T-cell (primary cell): ENCODE measurements at regions of chr1 and their contacts with region 1.

Region 1: GRCh38 chr1:110460253-110461220 is 9.6 kb downstream of the PROK1 start:
- DNase-seq: peak; percentile 55 to 89 (median 79)
- ATAC-seq: peak; percentile 90 to 92 (median 91)
- H3K4me3 ChIP-seq: no peak overlapping the region
- H3K4me3 Mint-ChIP-seq: no peak overlapping the region
- H3K27ac ChIP-seq: no peak overlapping the region
- H3K27ac Mint-ChIP-seq: no peak overlapping the region
- H3K4me1 ChIP-seq: no peaks in the 10 kb centered on the region
- H3K4me1 Mint-ChIP-seq: no peaks in the 10 kb centered on the region
- H3K27me3 ChIP-seq: peaks cover 0 to 10% of the 10 kb centered on the region in 2 experiments
- H3K27me3 Mint-ChIP-seq: peaks cover 3 to 4% of the 10 kb centered on the region in 2 donors

Region 2: DNA sequence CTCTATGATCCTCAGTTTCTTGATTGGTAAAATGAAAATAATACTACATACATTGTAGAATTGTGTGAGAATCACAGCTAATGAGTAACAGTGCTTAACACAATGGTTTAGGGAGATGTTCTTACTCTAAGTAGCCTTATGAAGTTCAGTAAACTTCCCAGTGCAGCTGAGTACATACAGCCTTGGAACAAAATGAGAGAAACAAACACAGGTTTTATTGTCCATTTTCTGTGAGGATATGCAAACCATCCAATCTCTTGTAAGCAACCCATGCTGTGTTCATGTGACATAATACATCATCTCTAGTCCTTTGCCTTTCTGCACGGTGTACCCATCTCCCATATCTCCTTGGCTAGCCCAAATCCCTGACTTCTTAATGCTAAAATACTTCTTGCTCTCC is 440.8 kb before region 1 on chr1:
- CTCF ChIA-PET with region 1: no interaction called
- POLR2A ChIA-PET with region 1: no interaction called
- DNase-seq: no peak
- ATAC-seq: no peak
- H3K4me3 ChIP-seq: no peak overlapping the region
- H3K4me3 Mint-ChIP-seq: no peak overlapping the region
- H3K27ac ChIP-seq: no peak overlapping the region
- H3K27ac Mint-ChIP-seq: no peak overlapping the region
- H3K4me1 ChIP-seq: no peaks in the 10 kb centered on the region
- H3K4me1 Mint-ChIP-seq: no peaks in the 10 kb centered on the region
- H3K27me3 ChIP-seq: no peaks in the 10 kb centered on the region
- H3K27me3 Mint-ChIP-seq: no peaks in the 10 kb centered on the region

Region 3: GRCh38 chr1:110407260-110408210 is 53.0 kb before region 1 on chr1 and contains the start of gene LAMTOR5:
- CTCF ChIA-PET with region 1: interaction called, 8 to 25 read pairs
- POLR2A ChIA-PET with region 1: interaction called in 1 of 2 experiments, 4 read pairs
- DNase-seq: peak; percentile 78 to 94 (median 86)
- ATAC-seq: peak; percentile 94 to 96 (median 96)
- H3K4me3 ChIP-seq: peak within 1 kb of the TSS; percentile 83 to 92
- H3K4me3 Mint-ChIP-seq: peak within 1 kb of the TSS; percentile 97 to 100 (median 98)
- H3K27ac ChIP-seq: peak within 1 kb of the TSS; percentile 85
- H3K27ac Mint-ChIP-seq: peak within 1 kb of the TSS; percentile 97 to 99
- H3K4me1 ChIP-seq: peaks cover 16% of the 10 kb centered on the region in 2 experiments
- H3K4me1 Mint-ChIP-seq: peaks cover 23 to 31% (median 30%) of the 10 kb centered on the region in 3 donors
- H3K27me3 ChIP-seq: no peaks in the 10 kb centered on the region
- H3K27me3 Mint-ChIP-seq: no peaks in the 10 kb centered on the region
- total RNA-seq, gene LAMTOR5: 60.0 to 68.6 (median 67.0) TPM

Region 4: DNA sequence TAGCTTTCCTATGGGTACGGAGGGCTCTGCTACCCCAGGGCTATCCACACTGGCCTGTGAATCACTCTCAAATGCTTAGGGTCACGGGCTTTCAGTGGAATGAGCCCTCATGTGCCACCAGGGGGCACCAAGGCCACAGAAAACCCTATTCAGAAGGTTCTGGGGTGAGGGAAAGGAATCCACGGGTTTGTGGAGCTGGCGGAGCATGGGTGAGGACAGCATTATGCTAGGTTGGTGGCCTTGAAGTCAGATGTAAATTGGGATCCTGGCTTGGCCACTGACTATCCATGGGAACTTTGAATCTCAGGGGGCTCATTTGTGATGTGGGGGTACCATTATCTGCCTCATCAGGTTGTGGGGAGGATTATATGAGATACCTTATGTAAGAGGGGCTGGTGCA is 48.0 kb before region 1 on chr1:
- CTCF ChIA-PET with region 1: interaction called, 8 to 25 read pairs
- POLR2A ChIA-PET with region 1: interaction called in 1 of 2 experiments, 4 read pairs
- DNase-seq: peak; percentile 8 to 74 (median 49)
- ATAC-seq: peak; percentile 29 to 44 (median 38)
- H3K4me3 ChIP-seq: no peak overlapping the region
- H3K4me3 Mint-ChIP-seq: no peak overlapping the region
- H3K27ac ChIP-seq: no peak overlapping the region
- H3K27ac Mint-ChIP-seq: peak overlapping the region in 1 of 2 donors; percentile 64
- H3K4me1 ChIP-seq: peaks cover 5 to 7% of the 10 kb centered on the region in 2 experiments
- H3K4me1 Mint-ChIP-seq: peaks cover 15 to 23% (median 19%) of the 10 kb centered on the region in 3 donors
- H3K27me3 ChIP-seq: no peaks in the 10 kb centered on the region
- H3K27me3 Mint-ChIP-seq: no peaks in the 10 kb centered on the region

Region 5: DNA sequence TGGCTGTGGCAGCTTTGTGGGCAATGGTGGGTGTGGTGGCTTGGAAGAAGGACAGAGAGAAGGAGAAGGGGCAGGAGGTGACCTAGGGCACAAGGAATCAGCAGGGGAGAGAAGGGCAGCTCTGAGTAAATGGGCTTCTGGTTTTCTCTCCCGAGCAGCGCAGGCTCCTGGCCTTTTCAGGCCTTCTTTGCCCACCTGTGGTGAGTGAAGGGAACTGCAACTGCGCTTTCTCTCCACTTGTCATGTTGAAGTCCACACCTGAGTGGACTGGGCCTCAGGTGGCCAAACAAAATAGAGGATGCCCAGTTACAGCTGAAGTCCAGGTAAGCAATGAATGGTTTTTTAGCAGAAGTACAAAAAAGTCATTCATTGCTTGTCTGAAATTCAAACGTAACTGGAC is 87.8 kb after region 1 on chr1:
- CTCF ChIA-PET with region 1: no interaction called
- POLR2A ChIA-PET with region 1: no interaction called
- DNase-seq: no peak
- ATAC-seq: no peak
- H3K4me3 ChIP-seq: no peak overlapping the region
- H3K4me3 Mint-ChIP-seq: no peak overlapping the region
- H3K27ac ChIP-seq: no peak overlapping the region
- H3K27ac Mint-ChIP-seq: no peak overlapping the region
- H3K4me1 ChIP-seq: no peaks in the 10 kb centered on the region
- H3K4me1 Mint-ChIP-seq: no peaks in the 10 kb centered on the region
- H3K27me3 ChIP-seq: peaks cover 0 to 18% of the 10 kb centered on the region in 2 experiments
- H3K27me3 Mint-ChIP-seq: peaks cover 32 to 45% of the 10 kb centered on the region in 2 donors

Region 6: DNA sequence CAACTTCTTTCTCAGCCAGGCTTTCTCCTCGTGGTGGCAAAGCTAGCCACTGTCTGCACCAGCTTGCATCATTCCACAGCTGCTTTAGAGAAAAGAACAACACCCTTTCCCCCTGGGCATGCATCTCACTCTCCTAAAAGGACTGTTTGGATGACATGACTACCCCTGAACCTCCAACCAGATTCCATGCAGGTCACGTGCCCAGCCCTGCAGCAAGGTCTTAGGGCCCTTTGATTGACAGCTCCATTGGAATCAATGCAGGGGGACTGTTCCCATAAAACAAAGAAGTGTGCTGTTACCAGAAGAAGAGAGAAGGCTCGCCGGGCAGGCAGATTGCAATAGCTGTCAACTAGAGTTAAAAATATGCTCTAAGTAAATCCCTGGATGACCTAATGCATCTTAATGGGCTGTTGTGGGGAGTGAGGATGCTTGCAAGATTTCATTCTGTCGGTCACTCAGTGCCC is 121.2 kb after region 1 on chr1:
- CTCF ChIA-PET with region 1: no interaction called
- POLR2A ChIA-PET with region 1: no interaction called
- DNase-seq: no peak
- ATAC-seq: no peak
- H3K4me3 ChIP-seq: no peak overlapping the region
- H3K4me3 Mint-ChIP-seq: no peak overlapping the region
- H3K27ac ChIP-seq: no peak overlapping the region
- H3K27ac Mint-ChIP-seq: no peak overlapping the region
- H3K4me1 ChIP-seq: no peaks in the 10 kb centered on the region
- H3K4me1 Mint-ChIP-seq: no peaks in the 10 kb centered on the region
- H3K27me3 ChIP-seq: peaks cover 0 to 24% of the 10 kb centered on the region in 2 experiments
- H3K27me3 Mint-ChIP-seq: peaks cover 14 to 19% of the 10 kb centered on the region in 2 donors